ENCODE measurements at regions of chr13 and their contacts with region 1.

Region 1: GRCh38 chr13:20160847-20161274 is at the start of gene GJA3:
- DNase-seq: no peak
- H3K4me3 ChIP-seq: peak within 1 kb of the TSS; percentile 34
- H3K27ac ChIP-seq: no peak within 1 kb of the TSS
- H3K4me1 ChIP-seq: peaks cover 5% of the 10 kb centered on the region
- H3K27me3 ChIP-seq: peaks cover 59% of the 10 kb centered on the region
- CTCF ChIP-seq: no peak
- total RNA-seq, gene GJA3: 0.05 TPM in 1 of 2 donors, not detected in the other

Region 2: DNA sequence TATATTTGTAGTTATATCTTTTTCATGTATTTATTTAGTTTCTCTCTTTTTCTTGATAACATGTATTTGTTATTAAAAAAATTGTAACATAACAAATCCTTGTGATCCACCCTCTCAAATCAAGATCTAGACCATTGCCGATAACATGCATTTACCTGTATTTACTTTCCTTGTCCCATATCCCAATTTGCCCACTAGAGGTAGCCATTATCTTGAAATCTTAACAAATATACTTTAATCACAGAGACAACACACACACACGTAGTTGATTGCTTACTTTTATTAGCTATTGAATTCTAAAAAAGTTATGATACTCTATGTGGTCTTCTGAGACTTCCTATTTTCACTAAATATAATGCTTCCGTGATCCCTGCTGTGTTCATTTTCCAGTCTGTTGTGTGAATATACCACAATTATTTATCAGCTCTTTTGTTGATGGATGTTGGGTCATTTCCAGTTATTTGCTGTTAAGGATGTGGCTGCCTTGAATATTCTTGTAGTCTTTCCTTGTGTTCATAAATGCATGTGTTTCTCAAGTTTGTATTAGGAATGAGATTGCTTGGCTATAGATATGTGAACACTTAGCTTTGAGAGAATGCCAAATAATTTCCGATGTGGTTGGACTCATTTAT is 233.6 kb before region 1 on chr13:
- intact Hi-C with region 1: loop called (anchors 5 kb)
- DNase-seq: no peak
- H3K4me3 ChIP-seq: no peak overlapping the region
- H3K27ac ChIP-seq: no peak overlapping the region
- H3K4me1 ChIP-seq: no peaks in the 10 kb centered on the region
- H3K27me3 ChIP-seq: no peaks in the 10 kb centered on the region
- CTCF ChIP-seq: peak; percentile 43

Region 3: DNA sequence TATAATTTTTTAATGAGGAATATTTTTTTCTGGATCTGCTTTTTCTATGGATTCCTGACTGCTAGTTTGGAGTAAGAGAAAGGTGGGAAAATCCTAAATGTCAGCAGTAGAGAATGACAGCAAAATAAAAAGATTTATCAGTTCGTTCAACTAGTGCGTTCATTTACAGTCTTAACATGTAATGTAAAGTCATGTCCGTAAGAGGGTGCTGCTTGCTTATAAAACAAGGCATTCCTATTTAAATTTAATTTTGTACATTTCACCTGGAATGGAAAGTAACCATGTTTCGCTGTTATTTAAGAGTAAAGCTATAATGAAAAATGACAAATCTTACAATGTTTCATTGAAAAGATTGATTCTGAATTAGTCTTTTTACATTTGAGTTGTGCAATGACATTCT is 125.7 kb before region 1 on chr13:
- intact Hi-C with region 1: no loop called
- DNase-seq: no peak
- H3K4me3 ChIP-seq: no peak overlapping the region
- H3K27ac ChIP-seq: no peak overlapping the region
- H3K4me1 ChIP-seq: no peaks in the 10 kb centered on the region
- H3K27me3 ChIP-seq: no peaks in the 10 kb centered on the region
- CTCF ChIP-seq: no peak

Region 4: DNA sequence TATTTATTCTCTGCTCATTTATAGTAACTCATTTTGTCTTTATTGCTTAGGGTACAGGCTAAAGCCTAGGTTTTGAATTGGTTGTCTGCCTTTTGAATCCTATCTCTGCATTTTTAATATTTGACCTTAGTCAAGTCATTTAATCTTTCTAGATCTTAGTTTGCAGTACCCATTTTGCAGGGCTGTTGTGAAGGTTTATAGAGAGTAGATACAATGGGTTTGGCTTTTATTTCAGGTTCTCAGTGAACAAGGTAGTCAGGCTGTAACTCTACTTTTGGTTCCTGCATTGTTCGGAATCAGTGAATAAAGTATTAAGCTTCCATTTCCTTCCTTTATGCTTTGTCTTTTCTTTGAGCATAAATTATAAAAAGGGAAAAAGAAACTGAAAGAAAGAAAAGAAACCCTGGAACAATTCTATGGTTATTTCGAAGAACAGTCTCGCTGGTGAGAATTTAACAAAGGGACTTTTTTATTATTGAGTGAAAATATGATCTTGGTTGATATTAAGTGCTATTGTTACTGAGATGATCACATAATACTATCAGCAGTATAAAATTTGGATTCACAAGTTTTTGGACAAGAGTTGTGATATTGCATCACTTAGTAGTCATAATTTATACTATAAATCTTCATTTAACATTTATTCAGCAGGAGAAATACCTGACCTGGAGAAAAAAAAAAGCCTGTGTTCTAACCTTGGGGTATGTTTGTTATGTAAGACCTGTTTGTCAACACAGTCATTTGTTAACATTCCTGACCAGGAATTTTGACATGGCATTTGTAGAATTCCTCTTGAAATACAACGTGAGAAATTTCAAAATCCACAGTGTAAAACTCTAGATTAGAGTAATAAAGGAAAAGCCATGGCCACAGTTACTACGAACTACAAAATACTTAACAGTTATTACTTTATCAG is 111.0 kb before region 1 on chr13:
- intact Hi-C with region 1: no loop called
- DNase-seq: no peak
- H3K4me3 ChIP-seq: no peak overlapping the region
- H3K27ac ChIP-seq: no peak overlapping the region
- H3K4me1 ChIP-seq: no peaks in the 10 kb centered on the region
- H3K27me3 ChIP-seq: no peaks in the 10 kb centered on the region
- CTCF ChIP-seq: no peak

Region 5: DNA sequence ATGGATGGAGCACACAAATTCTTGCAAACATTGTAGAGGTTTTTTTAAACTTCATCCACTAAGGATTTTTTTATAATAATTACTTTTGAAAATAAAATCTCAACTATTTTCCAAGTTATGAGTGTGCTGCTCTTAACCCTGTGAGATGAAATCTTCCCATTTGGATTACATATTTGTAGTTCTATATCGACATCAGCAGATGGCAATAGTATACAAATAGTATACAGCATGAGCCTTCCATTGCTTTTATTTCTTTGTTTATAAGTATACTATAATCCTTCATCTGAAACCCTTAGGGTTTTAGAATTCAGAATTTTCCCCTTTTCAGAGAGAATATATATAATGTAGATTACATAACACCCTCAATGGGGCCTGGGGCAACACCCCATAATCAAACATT is 70.5 kb before region 1 on chr13:
- intact Hi-C with region 1: loop called (anchors 5 kb)
- DNase-seq: no peak
- H3K4me3 ChIP-seq: no peak overlapping the region
- H3K27ac ChIP-seq: no peak overlapping the region
- H3K4me1 ChIP-seq: no peaks in the 10 kb centered on the region
- H3K27me3 ChIP-seq: no peaks in the 10 kb centered on the region
- CTCF ChIP-seq: no peak

Region 6: DNA sequence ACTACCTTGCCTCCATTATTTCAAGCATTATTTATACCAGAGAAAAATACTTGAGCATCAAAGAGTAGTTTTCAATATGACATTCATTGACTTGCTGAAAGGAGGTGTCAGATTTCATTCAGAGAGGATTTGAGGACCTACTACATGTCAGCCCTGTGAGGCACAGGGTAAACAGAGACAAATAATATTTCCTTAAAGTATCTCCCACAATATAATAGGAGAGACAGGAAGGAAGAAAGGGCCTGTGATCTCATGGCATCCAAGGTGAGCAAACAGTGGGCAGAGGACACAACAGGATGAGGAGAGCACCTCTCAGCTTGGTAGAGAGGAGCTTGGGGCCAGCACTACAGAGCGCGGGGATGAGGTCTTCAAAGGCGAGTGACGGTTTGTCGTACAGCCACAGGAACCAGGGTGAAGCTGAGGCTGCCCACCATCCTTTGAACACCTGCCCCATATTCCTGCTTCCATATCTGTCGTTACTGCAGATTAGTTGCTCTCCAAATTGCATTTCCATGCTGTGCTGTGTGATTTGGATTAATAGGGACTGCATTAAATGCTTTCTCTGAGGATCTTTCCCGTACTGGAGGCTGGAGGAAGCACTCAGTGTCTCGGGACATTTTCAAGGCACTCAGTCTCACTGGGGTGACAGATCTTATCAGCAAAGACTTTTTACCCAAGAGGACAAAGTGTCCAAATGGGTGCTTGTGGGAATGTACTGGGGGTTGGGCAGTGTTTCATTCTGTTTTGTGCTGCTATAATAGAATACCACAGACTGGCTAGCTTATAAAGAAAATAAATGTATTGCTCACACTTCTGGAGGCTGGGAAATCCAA is 59.2 kb before region 1 on chr13:
- intact Hi-C with region 1: no loop called
- DNase-seq: no peak
- H3K4me3 ChIP-seq: no peak overlapping the region
- H3K27ac ChIP-seq: no peak overlapping the region
- H3K4me1 ChIP-seq: no peaks in the 10 kb centered on the region
- H3K27me3 ChIP-seq: no peaks in the 10 kb centered on the region
- CTCF ChIP-seq: no peak

Region 7: DNA sequence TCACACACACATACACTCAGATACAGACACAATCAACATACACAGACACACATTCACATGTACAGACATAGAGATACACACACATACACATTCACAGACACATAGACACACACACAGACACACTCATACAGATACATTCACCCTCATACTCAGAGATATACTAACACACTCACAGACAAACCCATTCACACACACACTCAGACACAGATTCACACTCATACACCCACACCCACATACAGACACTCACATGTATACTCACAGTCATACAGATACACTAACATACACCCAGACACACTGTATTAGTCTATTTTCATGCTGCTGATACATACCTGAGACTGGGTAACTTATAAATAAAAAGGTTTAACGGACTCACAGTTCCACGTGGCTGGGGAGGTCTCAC is 30.8 kb before region 1 on chr13:
- intact Hi-C with region 1: loop called (anchors 1 kb)
- DNase-seq: no peak
- H3K4me3 ChIP-seq: no peak overlapping the region
- H3K27ac ChIP-seq: no peak overlapping the region
- H3K4me1 ChIP-seq: peaks cover 5% of the 10 kb centered on the region
- H3K27me3 ChIP-seq: peaks cover 7% of the 10 kb centered on the region
- CTCF ChIP-seq: no peak